ENCODE measurements at regions of chr17 and their contacts with region 1.

Region 1: DNA sequence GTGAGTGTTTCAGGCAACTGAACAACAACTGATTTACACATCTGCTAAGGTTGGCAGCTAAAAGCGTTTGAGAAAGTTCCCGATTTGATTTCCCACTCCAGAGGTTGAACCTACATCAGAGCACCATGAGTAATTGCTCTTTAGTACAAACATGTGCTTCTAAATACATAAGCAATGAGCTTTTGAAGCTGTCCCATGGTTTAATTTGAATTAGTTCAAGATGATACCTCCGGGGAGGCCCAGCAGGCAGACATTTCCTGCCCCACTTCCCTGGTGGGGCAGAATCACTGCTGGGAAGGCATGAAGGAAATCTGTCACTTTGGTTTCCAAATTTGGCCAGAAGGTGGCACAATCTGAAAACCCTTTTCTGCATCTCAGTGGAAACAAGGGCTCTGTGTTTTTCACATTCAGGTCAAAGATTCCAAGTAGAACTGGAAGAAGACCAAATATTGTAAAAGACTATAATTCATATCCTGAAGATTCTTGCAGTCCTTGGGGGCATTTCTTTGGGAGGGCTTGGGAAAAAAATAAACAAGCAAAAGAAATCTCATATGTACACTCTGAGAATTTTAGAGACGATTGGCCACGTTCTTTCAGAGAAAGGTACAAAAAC is 176.2 kb upstream of the FAM20A start:
- DNase-seq: peak; percentile 36
- H3K4me3 ChIP-seq: no peak overlapping the region
- H3K27ac ChIP-seq: no peak overlapping the region
- H3K27me3 ChIP-seq: no peaks in the 10 kb centered on the region
- CTCF ChIP-seq: peak; percentile 77

Region 2: DNA sequence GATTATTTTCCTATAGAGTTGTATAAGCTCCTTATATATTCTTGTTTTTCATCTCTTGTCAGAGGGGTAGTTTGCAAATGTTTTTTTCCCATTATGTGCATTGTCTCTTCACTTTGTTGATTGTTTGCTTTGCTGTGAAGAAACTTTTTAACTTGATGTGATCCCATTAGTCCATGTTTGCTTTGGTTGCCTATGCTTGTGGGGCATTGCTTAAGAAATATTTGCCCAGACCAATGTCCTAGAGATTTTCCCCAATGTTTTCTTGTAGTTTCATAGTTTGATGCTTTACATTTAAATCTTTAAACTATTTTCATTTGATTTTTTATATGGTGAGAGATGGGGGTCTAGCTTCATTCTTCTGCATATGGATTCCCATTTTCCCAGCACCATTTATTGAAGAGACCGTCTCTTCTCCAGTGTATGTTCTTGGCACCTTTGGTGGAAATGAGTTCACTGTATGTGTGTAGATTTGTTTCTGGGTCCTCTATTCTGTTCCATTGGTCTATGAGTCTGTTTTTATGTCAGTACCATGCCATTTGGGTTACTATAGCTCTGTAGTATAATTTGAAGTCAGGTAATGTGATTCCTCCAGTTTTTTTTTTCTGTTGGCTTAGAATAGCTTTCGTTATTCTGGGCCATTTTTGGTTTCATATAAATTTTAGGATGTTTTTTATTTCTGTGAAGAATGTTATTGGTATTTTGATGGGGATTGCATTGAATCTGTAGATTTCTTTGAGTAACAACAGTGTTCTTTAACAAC is 12.0 kb after region 1 on chr17:
- CTCF ChIA-PET with region 1: interaction called, 10 read pairs
- POLR2A ChIA-PET with region 1: no interaction called
- DNase-seq: no peak
- H3K4me3 ChIP-seq: no peak overlapping the region
- H3K27ac ChIP-seq: no peak overlapping the region
- H3K27me3 ChIP-seq: no peaks in the 10 kb centered on the region
- CTCF ChIP-seq: no peak

Region 3: GRCh38 chr17:68972119-68972704 is 194.9 kb after region 1 on chr17:
- CTCF ChIA-PET with region 1: interaction called, 46 read pairs
- POLR2A ChIA-PET with region 1: no interaction called
- DNase-seq: no peak
- H3K4me3 ChIP-seq: no peak overlapping the region
- H3K27ac ChIP-seq: no peak overlapping the region
- H3K27me3 ChIP-seq: no peaks in the 10 kb centered on the region
- CTCF ChIP-seq: peak; percentile 77

Region 4: DNA sequence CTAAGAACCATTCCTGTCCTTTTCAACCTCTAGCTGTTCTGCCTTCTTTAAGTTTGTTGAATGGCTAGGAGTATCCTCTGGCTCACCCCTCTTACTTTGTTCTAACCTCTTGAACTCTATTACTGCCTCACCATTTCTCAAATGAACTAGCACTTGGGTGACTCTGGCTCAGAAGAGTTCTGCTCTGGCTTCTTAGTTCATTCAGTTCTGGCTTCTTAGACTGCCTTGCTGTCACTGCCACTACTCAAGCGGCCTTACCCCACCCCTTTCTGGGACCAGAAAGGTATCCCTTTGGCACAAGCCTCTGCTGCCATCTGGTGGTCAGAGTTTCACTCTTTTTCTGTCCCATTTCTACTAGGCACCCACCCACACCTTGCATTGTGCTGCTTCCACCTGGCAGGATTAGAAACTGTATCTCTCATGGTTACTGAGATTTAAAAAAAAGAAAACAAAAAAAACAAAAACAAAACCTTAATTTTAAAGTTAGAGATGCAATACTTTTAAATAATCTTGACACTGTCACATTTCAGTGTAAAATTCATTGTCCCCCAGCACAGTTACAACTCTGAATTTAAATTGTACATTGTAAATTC is 458.1 kb after region 1 on chr17:
- CTCF ChIA-PET with region 1: interaction called, 115 read pairs
- POLR2A ChIA-PET with region 1: no interaction called
- DNase-seq: peak; percentile 51
- H3K4me3 ChIP-seq: no peak overlapping the region
- H3K27ac ChIP-seq: no peak overlapping the region
- H3K27me3 ChIP-seq: no peaks in the 10 kb centered on the region
- CTCF ChIP-seq: peak; percentile 82

Region 5: DNA sequence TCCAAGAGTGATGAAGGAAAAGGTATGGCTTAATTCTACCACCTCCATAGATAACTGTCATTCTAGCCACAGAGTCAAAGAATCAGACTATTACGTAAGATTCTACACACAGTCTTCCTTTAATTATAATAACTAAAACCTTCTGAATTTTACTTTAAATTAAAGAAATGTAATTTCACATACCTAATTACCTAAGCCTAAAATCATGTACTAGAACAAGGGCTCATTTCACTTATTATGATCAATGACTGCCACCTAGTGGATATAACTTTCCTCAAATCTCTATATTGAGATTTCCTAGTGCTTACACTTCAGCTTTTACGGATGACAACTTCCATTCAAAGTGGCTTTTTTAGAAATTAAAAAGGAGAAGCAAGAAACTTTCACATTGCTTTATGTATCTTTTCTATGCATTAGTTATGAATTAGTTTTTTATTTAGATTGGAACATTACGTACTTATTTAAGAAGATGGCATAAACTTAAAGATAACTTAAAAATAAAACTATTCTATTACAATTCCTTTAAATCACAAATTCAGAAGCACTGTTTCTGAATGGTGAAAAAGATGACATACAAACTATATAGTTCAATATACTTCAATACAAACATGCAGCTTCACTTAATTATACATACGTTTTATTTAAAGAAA is 469.5 kb after region 1 on chr17:
- CTCF ChIA-PET with region 1: interaction called, 115 read pairs
- POLR2A ChIA-PET with region 1: no interaction called
- DNase-seq: no peak
- H3K4me3 ChIP-seq: no peak overlapping the region
- H3K27ac ChIP-seq: no peak overlapping the region
- H3K27me3 ChIP-seq: no peaks in the 10 kb centered on the region
- CTCF ChIP-seq: peak; percentile 54